Activated T-helper 1 cell treated with anti-CD3 and anti-CD28 coated beads, Interleukin-12 subunit alpha, Interleukin-12 subunit beta, Interleukin-2, Interleukin-4 antibody, amounts not matched to agents 30 ng/mL and 10 ng/mL and 1 ng/mL, durations not matched to agents 14 hours and 24 hours and 36 hours (primary cell): ENCODE measurements at regions of chr3 and their contacts with region 1.

Region 1: GRCh38 chr3:153291056-153291685 is 129.1 kb downstream of the RAP2B start:
- DNase-seq: no peak
- H3K4me3 Mint-ChIP-seq: no peak overlapping the region
- H3K27ac Mint-ChIP-seq: no peak overlapping the region
- H3K4me1 Mint-ChIP-seq: peaks cover 41% of the 10 kb centered on the region
- H3K27me3 Mint-ChIP-seq: no peaks in the 10 kb centered on the region

Region 2: GRCh38 chr3:153305189-153305588 is 14.0 kb after region 1 on chr3:
- intact Hi-C with region 1: no loop called
- DNase-seq: no peak
- H3K4me3 Mint-ChIP-seq: no peak overlapping the region
- H3K27ac Mint-ChIP-seq: no peak overlapping the region
- H3K4me1 Mint-ChIP-seq: no peaks in the 10 kb centered on the region
- H3K27me3 Mint-ChIP-seq: no peaks in the 10 kb centered on the region

Region 3: DNA sequence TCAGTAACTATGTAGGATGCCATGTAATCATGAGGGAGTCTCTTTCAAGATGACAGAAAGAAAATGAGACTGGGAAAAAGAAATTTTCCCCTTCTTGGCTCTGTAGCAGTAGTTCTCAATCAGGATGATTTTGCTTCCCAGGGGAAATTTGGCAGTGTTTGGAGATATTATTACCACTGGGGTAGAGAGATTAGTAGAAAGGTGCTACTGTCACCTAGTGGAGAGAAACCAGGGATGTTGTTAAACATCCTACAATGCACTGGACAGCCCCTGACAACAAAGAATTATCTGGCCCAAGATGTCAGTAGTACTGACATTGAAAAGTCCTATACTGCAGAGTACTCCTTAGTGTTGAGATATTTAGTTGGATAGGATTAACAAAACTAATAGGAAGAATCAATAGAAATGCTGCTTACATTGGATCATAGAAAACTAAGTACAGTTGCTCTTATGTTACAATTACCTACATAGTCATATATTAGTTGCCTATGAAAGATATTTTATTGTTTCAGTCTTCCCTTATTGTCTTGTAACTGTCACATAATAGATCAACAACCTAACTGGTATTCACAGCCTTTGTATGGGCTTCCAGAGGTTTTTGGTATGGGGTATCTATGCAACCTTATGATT is 304.1 kb after region 1 on chr3:
- intact Hi-C with region 1: loop called (anchors 10 kb)
- DNase-seq: no peak
- H3K4me3 Mint-ChIP-seq: no peak overlapping the region
- H3K27ac Mint-ChIP-seq: no peak overlapping the region
- H3K4me1 Mint-ChIP-seq: no peaks in the 10 kb centered on the region
- H3K27me3 Mint-ChIP-seq: no peaks in the 10 kb centered on the region